ENCODE measurements at regions of chr17 and their contacts with region 1.

Region 1: DNA sequence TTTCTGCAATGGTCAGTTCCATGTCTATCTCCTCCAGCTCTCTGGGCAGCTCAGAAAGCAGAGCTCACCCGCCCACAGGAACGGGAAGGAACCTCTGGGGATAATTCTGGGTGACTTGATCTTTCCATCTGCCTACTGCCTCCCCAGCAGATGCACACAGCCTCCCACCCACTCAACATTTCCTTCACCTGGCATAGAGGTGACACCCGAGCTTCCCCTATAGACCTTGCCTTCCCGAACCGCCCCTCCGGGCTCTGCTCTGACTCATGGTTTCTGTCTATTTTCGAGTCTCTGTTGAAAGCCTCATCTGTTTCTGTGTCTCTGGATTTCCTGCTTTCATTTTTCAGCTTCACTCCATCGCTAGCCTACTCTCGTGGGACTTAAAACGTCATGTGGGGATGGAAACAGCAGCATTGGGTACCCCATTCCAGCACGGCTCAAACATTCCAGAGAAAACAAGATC is 11.4 kb downstream of the GGA3 start:
- DNase-seq: no peak

Region 2: GRCh38 chr17:75124041-75124818 is 125.8 kb before region 1 on chr17:
- CTCF ChIA-PET with region 1: interaction called, 14 read pairs
- POLR2A ChIA-PET with region 1: no interaction called
- DNase-seq: no peak

Region 3: DNA sequence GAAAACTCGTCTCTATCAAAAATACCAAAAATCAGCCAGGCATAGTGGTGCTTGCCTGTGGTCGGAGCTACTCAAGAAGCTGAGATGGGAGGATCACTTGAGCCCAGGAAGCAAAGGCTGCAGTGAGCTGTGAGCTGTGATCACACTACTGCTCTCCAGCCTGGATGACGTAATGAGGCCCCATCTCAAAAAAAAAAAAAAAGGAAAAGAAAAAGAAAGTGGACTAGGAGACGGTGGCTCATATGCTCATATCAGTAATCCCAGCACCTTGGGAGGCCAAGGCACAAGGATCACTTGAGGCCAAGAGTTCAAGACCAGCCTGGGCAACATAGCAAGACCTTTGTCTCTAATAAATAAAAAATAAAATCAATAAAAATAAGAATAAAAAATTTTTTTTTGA is 58.5 kb before region 1 on chr17:
- CTCF ChIA-PET with region 1: no interaction called
- POLR2A ChIA-PET with region 1: no interaction called
- DNase-seq: no peak

Region 4: DNA sequence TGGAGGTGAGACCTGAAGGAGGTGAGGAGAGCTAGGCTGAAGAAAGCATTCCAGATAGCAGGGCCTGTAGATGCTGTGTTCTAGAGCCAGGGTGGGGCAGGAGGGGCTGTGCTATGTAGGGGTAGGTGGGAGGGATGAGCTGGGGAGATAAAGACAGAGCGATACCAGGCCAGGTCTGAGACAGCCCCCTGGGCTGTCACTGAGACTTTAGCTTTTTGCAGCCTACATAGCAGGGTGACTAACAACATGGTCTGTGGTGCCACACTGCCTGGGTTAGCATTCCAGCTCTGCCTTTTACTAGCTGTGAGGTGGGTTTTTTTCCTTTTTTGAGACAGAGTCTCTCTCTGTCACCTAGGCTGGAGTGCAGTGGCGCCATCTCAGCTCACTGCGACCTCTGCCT is 30.2 kb before region 1 on chr17:
- CTCF ChIA-PET with region 1: no interaction called
- POLR2A ChIA-PET with region 1: no interaction called
- DNase-seq: no peak

Region 5: GRCh38 chr17:75238684-75239191 is 11.3 kb before region 1 on chr17:
- CTCF ChIA-PET with region 1: interaction called, 24 read pairs
- POLR2A ChIA-PET with region 1: interaction called, 3 read pairs
- DNase-seq: peak; percentile 86

Region 6: GRCh38 chr17:75261336-75262111 is 11.5 kb after region 1 on chr17 and contains the starts of genes GGA3 and MRPS7:
- CTCF ChIA-PET with region 1: no interaction called
- POLR2A ChIA-PET with region 1: interaction called, 14 read pairs
- DNase-seq: peak; percentile 96

Region 7: DNA sequence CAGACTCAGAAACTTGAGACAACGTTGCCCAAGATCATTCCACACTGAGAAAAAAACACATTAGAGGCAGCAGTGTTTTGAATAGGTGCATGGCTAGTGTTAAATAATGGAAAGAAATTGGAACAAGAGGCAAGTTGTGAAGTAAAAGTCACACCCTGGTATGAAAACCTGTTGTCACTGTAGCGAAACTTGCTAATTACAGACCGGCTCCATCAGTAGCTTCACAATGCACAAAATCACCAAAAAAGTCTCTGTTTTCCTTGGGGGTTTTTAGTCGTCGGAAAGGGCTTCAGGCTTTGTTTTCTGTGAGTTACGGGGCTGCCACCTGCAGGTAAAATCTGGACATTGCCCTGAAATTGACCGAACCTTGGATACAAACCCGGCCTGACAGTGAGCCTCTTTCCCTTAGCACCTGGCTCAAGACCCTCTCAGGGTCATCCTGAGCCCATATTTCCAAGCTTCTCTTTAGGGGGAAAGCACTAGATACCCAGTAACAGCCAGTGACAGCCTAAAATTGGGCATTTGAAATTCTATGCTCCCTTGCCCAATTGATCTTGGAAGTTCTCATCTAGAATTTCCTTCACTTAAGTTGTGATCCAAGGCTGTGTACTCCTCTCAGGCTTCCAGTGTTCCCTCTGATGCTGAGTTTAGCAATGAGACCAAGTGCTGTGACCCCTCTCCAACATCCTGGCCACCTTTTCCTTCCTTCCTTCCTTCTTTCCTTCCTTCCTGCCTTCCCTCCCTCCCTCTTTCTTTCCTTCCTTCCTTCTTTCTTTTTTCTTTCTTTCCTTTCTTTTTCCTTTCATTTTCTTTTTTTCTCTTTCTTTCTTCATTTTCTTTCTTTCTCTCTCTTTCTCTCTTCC is 162.6 kb after region 1 on chr17:
- CTCF ChIA-PET with region 1: interaction called, 12 read pairs
- POLR2A ChIA-PET with region 1: interaction called, 3 read pairs
- DNase-seq: peak; percentile 76